Gastrocnemius medialis (tissue), 4 donors: ENCODE measurements at regions of chr5 and their contacts with region 1.

Region 1: GRCh38 chr5:61666064-61666621 is 334.1 kb downstream of the ZSWIM6 start:
- DNase-seq: peak in 1 of 2 donors; percentile 5
- ATAC-seq: no peak
- H3K4me3 ChIP-seq: no peak overlapping the region
- H3K27ac ChIP-seq: no peak overlapping the region
- H3K4me1 ChIP-seq: no peaks in the 10 kb centered on the region
- H3K27me3 ChIP-seq: no peaks in the 10 kb centered on the region
- CTCF ChIP-seq: no peak
- POLR2A ChIP-seq: no peak

Region 2: GRCh38 chr5:59757442-59757841 is 1908.7 kb before region 1 on chr5:
- in situ Hi-C with region 1: no loop called
- intact Hi-C with region 1: no loop called
- DNase-seq: no peak
- ATAC-seq: no peak
- H3K4me3 ChIP-seq: no peak overlapping the region
- H3K27ac ChIP-seq: no peak overlapping the region
- H3K4me1 ChIP-seq: no peaks in the 10 kb centered on the region
- H3K27me3 ChIP-seq: no peaks in the 10 kb centered on the region
- CTCF ChIP-seq: no peak
- POLR2A ChIP-seq: no peak

Region 3: GRCh38 chr5:60960591-60960990 is 705.6 kb before region 1 on chr5:
- in situ Hi-C with region 1: loop called in 2 of 4 experiments (anchors 10 to 25 kb)
- intact Hi-C with region 1: no loop called
- DNase-seq: no peak
- ATAC-seq: no peak
- H3K4me3 ChIP-seq: no peak overlapping the region
- H3K27ac ChIP-seq: no peak overlapping the region
- H3K4me1 ChIP-seq: peaks cover 17 to 19% of the 10 kb centered on the region in 2 donors
- H3K27me3 ChIP-seq: no peaks in the 10 kb centered on the region
- CTCF ChIP-seq: peak in 2 of 5 experiments; percentile 6 to 34
- POLR2A ChIP-seq: no peak